HEK293 (cell line): ENCODE measurements at regions of chr2 and their contacts with region 1.

Region 1: DNA sequence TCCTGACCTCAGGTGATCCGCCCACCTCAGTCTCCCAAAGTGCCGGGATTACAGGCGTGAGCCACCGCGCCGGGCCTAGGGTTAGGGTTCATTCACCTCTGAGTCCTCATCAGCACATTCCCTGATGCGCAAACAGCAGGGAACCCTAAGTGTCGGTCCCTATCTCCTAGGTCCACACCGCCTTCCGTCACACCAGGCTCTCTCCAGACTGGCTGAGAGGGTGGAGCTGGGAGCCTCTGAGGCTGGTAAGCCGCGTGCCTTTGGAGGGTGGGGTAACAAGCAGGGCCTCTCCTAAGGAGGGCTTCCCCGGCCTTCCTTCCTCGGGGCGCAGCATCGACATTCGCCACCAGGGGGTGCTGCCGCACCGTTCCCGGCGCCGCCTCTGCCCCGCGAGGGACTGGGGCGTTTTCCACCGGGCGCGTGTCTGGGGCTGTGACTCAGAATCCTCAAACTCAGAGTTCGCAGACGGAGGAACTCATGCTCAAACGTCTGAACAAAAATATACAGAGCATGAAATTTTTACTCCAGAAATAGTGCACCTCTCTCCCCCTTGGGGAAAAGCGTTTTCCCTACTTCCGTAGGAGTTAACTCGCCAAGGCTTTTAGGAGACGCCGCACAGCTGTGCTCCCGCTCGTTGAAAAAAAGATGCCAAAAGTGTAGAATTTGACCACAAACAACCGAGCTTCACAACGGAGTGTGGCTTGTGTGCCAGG is 63.9 kb upstream of the ASAP2 start:
- H3K4me3 ChIP-seq: no peak overlapping the region
- H3K27ac ChIP-seq: no peak overlapping the region
- H3K4me1 ChIP-seq: peaks cover 2% of the 10 kb centered on the region; the same call in 1 of the 2 replicates
- CTCF ChIP-seq: peak; percentile 95

Region 2: GRCh38 chr2:8872821-8873432 is 269.8 kb before region 1 on chr2:
- CTCF ChIA-PET with region 1: interaction called, 25 read pairs
- POLR2A ChIA-PET with region 1: no interaction called
- H3K4me3 ChIP-seq: no peak overlapping the region
- H3K27ac ChIP-seq: no peak overlapping the region
- H3K4me1 ChIP-seq: no peaks in the 10 kb centered on the region
- CTCF ChIP-seq: peak; percentile 15; the same call in 1 of the 2 replicates

Region 3: DNA sequence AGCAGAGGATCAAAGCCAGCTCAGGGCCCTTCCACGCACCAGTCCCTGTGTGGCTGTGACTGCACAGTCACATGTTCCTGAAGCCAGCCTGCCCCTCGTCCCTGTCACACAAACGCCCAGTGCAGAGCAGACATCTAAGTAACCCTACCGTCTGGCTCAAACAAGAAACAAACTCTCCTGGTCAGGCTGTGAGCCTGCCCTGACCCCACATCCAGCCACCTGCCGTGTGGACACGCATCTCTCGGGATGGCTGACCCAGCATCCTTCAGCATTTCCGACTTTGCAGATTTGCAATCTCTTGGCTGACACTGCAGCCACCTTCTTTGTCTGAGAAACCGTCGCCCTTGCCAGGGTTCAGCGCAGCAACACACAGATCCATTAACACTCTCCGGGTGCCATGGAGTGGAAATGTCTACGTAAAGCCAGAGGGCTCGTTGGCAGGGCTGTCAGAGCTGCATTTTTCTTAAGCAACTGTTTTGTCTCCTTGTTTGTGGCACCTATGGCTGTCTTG is 18.4 kb before region 1 on chr2:
- CTCF ChIA-PET with region 1: no interaction called
- POLR2A ChIA-PET with region 1: no interaction called
- H3K4me3 ChIP-seq: no peak overlapping the region
- H3K27ac ChIP-seq: no peak overlapping the region
- H3K4me1 ChIP-seq: no peaks in the 10 kb centered on the region
- CTCF ChIP-seq: no peak

Region 4: GRCh38 chr2:9152975-9153642 is 10.4 kb after region 1 on chr2:
- CTCF ChIA-PET with region 1: interaction called, 18 read pairs
- POLR2A ChIA-PET with region 1: interaction called, 3 read pairs
- H3K4me3 ChIP-seq: no peak overlapping the region
- H3K27ac ChIP-seq: no peak overlapping the region
- H3K4me1 ChIP-seq: no peaks in the 10 kb centered on the region
- CTCF ChIP-seq: no peak

Region 5: GRCh38 chr2:9205963-9206948 is 63.5 kb after region 1 on chr2 and contains the start of gene ASAP2:
- CTCF ChIA-PET with region 1: interaction called, 12 read pairs
- POLR2A ChIA-PET with region 1: no interaction called
- H3K4me3 ChIP-seq: peak within 1 kb of the TSS; percentile 93
- H3K27ac ChIP-seq: peak within 1 kb of the TSS; percentile 91
- H3K4me1 ChIP-seq: peaks cover 10% of the 10 kb centered on the region
- CTCF ChIP-seq: peak; percentile 71

Region 6: GRCh38 chr2:9268301-9269080 is 125.8 kb after region 1 on chr2:
- CTCF ChIA-PET with region 1: no interaction called
- POLR2A ChIA-PET with region 1: no interaction called
- H3K4me3 ChIP-seq: no peak overlapping the region
- H3K27ac ChIP-seq: no peak overlapping the region
- H3K4me1 ChIP-seq: no peaks in the 10 kb centered on the region; the same call in 1 of the 2 replicates
- CTCF ChIP-seq: no peak

Region 7: GRCh38 chr2:9333591-9334171 is 191.0 kb after region 1 on chr2:
- CTCF ChIA-PET with region 1: interaction called, 20 read pairs
- POLR2A ChIA-PET with region 1: interaction called, 3 read pairs
- H3K4me3 ChIP-seq: no peak overlapping the region
- H3K27ac ChIP-seq: no peak overlapping the region
- H3K4me1 ChIP-seq: peaks cover 11% of the 10 kb centered on the region
- CTCF ChIP-seq: peak; percentile 53